ENCODE measurements at regions of chr1 and their contacts with region 1.

Region 1: DNA sequence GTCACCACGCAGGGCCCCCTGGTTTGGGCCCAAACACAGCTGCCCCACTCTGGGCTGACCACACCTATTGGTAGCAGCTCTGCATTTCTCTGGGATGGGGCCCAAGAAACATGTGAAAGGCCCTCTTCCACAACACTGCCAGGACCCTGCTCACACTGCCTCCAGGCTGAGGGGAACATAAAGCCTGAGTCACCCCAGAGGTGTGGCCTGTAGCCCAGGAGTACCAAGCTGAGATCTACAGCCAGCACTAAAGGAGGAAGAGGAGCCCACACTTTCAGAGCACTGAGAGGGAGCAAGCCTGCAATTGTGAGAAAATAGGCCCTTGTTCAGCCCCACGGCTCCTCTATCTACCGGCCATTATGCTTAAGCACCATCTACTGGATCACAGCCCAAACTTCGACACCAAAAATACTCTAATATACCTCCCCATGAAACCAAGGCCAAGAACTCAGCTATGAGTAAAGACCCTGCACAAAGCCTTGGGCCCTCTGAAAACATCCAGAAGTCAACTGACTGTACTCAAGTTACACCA is 14.4 kb upstream of the OR2T10 start:
- DNase-seq: peak; percentile 28
- H3K4me3 Mint-ChIP-seq: no peak overlapping the region
- H3K27ac Mint-ChIP-seq: no peak overlapping the region
- H3K4me1 Mint-ChIP-seq: peaks cover 15% of the 10 kb centered on the region
- H3K27me3 Mint-ChIP-seq: no peaks in the 10 kb centered on the region

Region 2: DNA sequence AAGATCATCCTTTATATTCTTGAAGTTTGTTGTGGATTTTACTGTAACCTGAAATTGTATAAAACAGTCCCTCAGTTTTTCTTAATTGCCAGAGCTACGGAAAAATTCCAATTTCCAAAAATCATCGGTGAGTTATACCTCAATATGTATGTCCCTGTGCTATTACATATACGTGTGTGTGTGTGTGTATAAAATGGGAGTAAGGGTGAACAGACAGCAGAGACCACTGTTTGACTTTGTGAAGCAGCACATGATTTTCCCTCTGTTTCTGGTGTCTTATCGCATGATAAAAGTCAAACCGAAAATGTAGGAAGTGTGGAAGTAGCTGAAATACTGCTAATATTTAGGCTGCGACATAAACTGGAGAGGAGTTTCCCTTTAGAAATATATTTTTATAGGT is 207.9 kb before region 1 on chr1:
- CTCF ChIA-PET with region 1: interaction called, 18 read pairs
- DNase-seq: no peak
- H3K4me3 Mint-ChIP-seq: no peak overlapping the region
- H3K27ac Mint-ChIP-seq: no peak overlapping the region
- H3K4me1 Mint-ChIP-seq: peaks cover 4% of the 10 kb centered on the region
- H3K27me3 Mint-ChIP-seq: no peaks in the 10 kb centered on the region

Region 3: DNA sequence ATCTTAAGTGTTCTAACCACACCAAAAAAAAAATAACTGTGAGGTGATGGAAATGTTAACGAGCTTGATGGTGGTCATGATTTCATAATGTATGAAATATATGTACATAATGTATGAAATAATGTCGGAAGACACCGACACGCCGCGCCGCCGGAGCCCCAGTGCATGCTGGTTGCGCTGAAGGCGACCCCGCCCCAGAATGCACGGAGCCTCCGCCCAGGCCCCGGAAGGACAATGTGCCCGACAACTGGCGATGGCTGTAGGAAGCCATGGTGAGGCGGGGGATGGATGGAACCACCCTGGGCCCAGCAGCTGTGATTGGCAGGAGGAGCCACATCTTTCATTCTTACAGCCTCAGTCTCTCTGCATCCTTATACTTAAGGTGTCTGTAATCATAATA is 21.9 kb before region 1 on chr1:
- CTCF ChIA-PET with region 1: no interaction called
- DNase-seq: no peak
- H3K4me3 Mint-ChIP-seq: no peak overlapping the region
- H3K27ac Mint-ChIP-seq: no peak overlapping the region
- H3K4me1 Mint-ChIP-seq: peaks cover 7% of the 10 kb centered on the region
- H3K27me3 Mint-ChIP-seq: no peaks in the 10 kb centered on the region

Region 4: DNA sequence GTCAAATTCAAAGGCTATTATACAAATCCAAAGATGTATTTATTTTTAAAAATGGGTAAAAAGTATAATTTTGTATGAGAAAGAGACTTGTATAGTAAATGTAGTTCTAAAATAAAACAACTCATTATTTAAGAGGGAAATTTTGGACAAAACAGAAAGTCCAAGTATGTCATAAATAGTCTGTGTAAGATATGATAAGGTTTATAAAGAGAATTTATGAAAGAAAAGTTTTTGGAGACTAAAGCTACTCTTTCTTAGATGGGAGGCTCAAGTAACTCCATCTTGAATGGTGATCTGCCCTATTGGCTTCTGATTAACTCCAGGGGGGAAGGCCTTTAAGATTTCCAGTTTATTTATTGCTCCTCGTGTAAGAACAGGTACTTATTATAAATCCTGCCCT is 58.1 kb after region 1 on chr1:
- CTCF ChIA-PET with region 1: no interaction called
- DNase-seq: no peak
- H3K4me3 Mint-ChIP-seq: no peak overlapping the region
- H3K27ac Mint-ChIP-seq: no peak overlapping the region
- H3K4me1 Mint-ChIP-seq: no peaks in the 10 kb centered on the region
- H3K27me3 Mint-ChIP-seq: no peaks in the 10 kb centered on the region

Measured in activated naive CD4-positive, alpha-beta T cell treated with anti-CD3 and anti-CD28 coated beads, Interleukin-2, amount 10 ng/mL, durations not matched to agents 7 days and 5 days (primary cell).